HepG2 (cell line): ENCODE measurements at regions of chr5 and their contacts with region 1.

Region 1: GRCh38 chr5:141564216-141564692 is 54.5 kb downstream of the DIAPH1 start:
- DNase-seq: peak; percentile 95
- ATAC-seq: peak; percentile 85
- H3K4me3 ChIP-seq: no peak overlapping the region
- H3K27ac ChIP-seq: peak overlapping the region; percentile 67
- H3K4me1 ChIP-seq: peaks cover 10% of the 10 kb centered on the region
- H3K27me3 ChIP-seq: no peaks in the 10 kb centered on the region
- CTCF ChIP-seq: peak; percentile 78
- EP300 ChIP-seq: no peak
- POLR2A ChIP-seq: no peak
- RAD21 ChIP-seq: peak; percentile 56; the same call in 1 of the 2 replicates

Region 2: DNA sequence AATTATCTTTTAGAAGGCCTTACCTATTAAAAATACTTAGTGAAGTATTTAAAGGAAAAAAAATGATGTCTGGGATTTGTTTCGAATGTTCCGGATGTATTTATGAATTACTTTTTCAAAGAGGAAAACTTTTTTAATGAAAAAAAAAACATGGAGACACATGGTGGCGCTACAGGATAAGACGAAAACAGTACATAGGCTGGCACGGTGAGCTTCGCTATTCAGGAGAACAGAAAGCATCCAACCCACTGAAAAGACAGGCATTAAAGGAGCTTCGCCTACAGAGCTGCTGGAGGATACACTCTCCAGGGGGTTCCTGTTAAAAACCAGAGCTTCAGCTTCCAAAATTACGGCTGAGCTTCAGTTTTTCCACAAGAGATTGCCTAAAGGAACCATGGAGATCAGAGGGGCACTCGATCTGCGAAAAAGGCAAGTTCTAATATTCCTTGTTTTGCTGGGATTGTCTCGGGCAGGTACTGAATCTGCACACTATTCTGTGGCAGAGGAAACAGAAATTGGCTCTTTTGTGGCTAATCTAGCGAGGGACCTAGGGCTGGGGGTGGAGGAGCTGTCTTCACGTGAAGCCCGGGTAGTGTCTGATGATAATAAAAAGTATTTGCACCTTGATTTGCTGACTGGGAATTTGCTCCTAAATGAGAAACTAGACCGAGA is 341.0 kb before region 1 on chr5 and contains the start of gene PCDHB14:
- CTCF ChIA-PET with region 1: interaction called, 14 read pairs
- POLR2A ChIA-PET with region 1: interaction called, 4 read pairs
- in situ Hi-C with region 1: loop called (anchors 5 kb)
- intact Hi-C with region 1: loop called (anchors 1 kb)
- DNase-seq: peak; percentile 45
- ATAC-seq: peak; percentile 92
- H3K4me3 ChIP-seq: peak within 1 kb of the TSS; percentile 41 to 57 (median 52)
- H3K27ac ChIP-seq: no peak within 1 kb of the TSS
- H3K4me1 ChIP-seq: 0 out of 2 replicates have a peak, but pooled peaks cover 7% of the 10 kb centered on the region
- H3K27me3 ChIP-seq: peaks cover 3 to 4% of the 10 kb centered on the region in 2 experiments; a peak in 3 of 5 replicates
- CTCF ChIP-seq: peak; percentile 65
- EP300 ChIP-seq: no peak
- POLR2A ChIP-seq: no peak
- RAD21 ChIP-seq: no peak
- total RNA-seq, gene PCDHB14: 0.32 and 0.40 TPM in 2 replicates

Region 3: DNA sequence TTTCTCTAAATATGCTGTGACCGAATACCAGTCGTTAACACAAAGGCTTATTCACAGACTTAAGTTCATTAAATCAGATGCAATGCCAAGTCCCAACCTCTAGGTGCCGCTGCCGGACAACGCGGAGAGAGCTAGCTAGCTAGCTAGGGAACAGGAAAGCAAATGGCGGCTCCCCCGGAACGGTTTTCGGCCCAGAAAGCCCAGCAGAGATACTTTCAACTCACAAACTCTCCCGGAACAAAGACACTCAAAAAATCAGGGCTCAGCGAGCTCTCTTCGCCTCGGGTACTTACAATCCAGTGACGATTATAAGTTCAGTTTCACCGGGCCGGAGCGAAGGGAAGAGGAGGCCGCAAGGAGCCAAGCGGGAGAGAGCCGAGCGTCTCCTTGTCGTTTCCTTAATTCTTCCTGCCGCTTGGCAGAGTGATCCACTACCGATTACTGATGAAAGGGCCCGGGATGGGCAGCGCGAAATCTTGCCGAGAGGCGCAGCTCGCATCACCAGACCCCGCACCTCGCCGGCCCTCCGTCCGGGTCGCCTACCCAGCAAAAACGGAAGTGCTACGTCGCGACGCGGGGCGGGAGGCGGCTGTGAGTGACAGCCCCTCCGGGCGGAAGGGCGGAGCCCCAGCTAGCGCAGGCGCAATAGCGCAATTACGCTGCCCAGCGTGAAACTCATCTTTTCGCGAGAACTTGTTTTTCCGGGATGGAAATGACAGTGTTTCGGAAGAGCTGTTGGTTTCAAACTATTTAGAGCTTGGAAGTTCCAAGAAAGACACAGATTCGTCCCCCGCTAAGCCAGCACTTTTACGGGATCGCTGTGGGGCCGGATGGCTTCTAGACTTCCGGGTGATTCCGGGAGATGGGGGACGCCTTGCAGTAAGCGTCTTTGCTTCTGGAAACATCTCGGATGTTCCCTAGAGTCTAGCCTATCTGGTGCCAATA is 243.8 kb before region 1 on chr5 and contains the start of gene TAF7:
- CTCF ChIA-PET with region 1: interaction called, 9 read pairs
- POLR2A ChIA-PET with region 1: interaction called, 12 read pairs
- in situ Hi-C with region 1: no loop called
- intact Hi-C with region 1: loop called (anchors 5 kb)
- DNase-seq: peak; percentile 89
- ATAC-seq: peak; percentile 97
- H3K4me3 ChIP-seq: peak within 1 kb of the TSS; percentile 67 to 83 (median 72)
- H3K27ac ChIP-seq: peak within 1 kb of the TSS; percentile 94
- H3K4me1 ChIP-seq: peaks cover 26% of the 10 kb centered on the region
- H3K27me3 ChIP-seq: no peaks in the 10 kb centered on the region; a peak in 1 of 5 replicates
- CTCF ChIP-seq: peak; percentile 80
- EP300 ChIP-seq: no peak
- POLR2A ChIP-seq: peak; percentile 87 to 95
- RAD21 ChIP-seq: no peak
- total RNA-seq, gene TAF7: 61.5 and 96.6 TPM in 2 replicates

Region 4: GRCh38 chr5:141359790-141360426 is 204.3 kb before region 1 on chr5 and contains the start of gene PCDHGB2:
- CTCF ChIA-PET with region 1: interaction called, 5 read pairs
- POLR2A ChIA-PET with region 1: interaction called, 4 read pairs
- in situ Hi-C with region 1: no loop called
- intact Hi-C with region 1: loop called (anchors 2 kb)
- DNase-seq: peak; percentile 48
- ATAC-seq: peak; percentile 78
- H3K4me3 ChIP-seq: peak within 1 kb of the TSS; percentile 17 to 63 (median 50); a peak in 5 of 6 replicates
- H3K27ac ChIP-seq: no peak within 1 kb of the TSS
- H3K4me1 ChIP-seq: no peaks in the 10 kb centered on the region
- H3K27me3 ChIP-seq: no peaks in the 10 kb centered on the region
- CTCF ChIP-seq: peak; percentile 62
- EP300 ChIP-seq: no peak
- POLR2A ChIP-seq: no peak
- RAD21 ChIP-seq: no peak
- total RNA-seq, gene PCDHGB2: 0.64 and 0.77 TPM in 2 replicates

Region 5: DNA sequence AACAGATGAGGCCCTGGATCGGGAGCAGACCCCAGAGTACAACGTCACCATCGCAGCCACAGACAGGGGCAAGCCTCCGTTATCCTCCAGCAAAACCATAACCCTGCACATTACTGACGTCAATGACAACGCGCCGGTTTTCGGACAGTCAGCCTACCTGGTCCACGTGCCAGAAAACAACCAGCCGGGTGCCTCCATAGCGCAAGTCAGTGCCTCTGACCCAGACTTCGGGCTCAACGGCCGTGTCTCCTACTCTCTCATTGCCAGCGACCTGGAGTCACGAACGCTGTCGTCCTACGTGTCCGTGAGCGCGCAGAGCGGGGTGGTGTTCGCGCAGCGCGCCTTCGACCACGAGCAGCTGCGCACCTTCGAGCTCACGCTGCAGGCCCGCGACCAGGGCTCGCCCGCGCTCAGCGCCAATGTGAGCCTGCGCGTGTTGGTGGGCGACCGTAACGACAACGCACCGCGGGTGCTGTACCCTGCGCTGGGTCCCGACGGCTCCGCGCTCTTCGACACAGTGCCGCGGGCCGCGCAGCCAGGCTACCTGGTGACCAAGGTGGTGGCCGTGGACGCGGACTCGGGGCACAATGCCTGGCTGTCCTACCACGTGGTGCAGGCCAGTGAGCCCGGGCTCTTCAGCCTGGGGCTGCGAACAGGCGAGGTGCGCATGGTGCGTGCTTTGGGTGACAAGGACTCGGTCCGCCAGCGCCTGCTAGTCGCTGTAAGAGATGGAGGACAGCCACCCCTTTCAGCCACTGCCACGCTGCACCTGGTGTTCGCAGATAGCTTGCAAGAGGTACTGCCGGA is 145.0 kb before region 1 on chr5:
- CTCF ChIA-PET with region 1: interaction called, 6 read pairs
- POLR2A ChIA-PET with region 1: no interaction called
- in situ Hi-C with region 1: loop called (anchors 5 kb)
- intact Hi-C with region 1: loop called (anchors 1 kb)
- DNase-seq: no peak
- ATAC-seq: no peak
- H3K4me3 ChIP-seq: no peak overlapping the region
- H3K27ac ChIP-seq: no peak overlapping the region
- H3K4me1 ChIP-seq: no peaks in the 10 kb centered on the region
- H3K27me3 ChIP-seq: no peaks in the 10 kb centered on the region
- CTCF ChIP-seq: no peak
- EP300 ChIP-seq: no peak
- POLR2A ChIP-seq: no peak
- RAD21 ChIP-seq: no peak

Region 6: GRCh38 chr5:141532726-141533125 is 31.5 kb before region 1 on chr5:
- CTCF ChIA-PET with region 1: no interaction called
- POLR2A ChIA-PET with region 1: no interaction called
- in situ Hi-C with region 1: no loop called
- intact Hi-C with region 1: no loop called
- DNase-seq: no peak
- ATAC-seq: no peak
- H3K4me3 ChIP-seq: no peak overlapping the region
- H3K27ac ChIP-seq: no peak overlapping the region
- H3K4me1 ChIP-seq: peaks cover 19% of the 10 kb centered on the region
- H3K27me3 ChIP-seq: no peaks in the 10 kb centered on the region
- CTCF ChIP-seq: no peak
- EP300 ChIP-seq: no peak
- POLR2A ChIP-seq: no peak
- RAD21 ChIP-seq: no peak